Posterior vena cava (tissue), 2 donors: ENCODE measurements at regions of chr5 and their contacts with region 1.

Region 1: GRCh38 chr5:96816411-96816939 is 8.7 kb upstream of the ERAP1 start:
- DNase-seq: no peak

Region 2: GRCh38 chr5:95102080-95102479 is 1714.4 kb before region 1 on chr5:
- intact Hi-C with region 1: no loop called
- DNase-seq: no peak

Region 3: GRCh38 chr5:96112123-96112670 is 704.3 kb before region 1 on chr5:
- intact Hi-C with region 1: no loop called
- DNase-seq: no peak

Region 4: DNA sequence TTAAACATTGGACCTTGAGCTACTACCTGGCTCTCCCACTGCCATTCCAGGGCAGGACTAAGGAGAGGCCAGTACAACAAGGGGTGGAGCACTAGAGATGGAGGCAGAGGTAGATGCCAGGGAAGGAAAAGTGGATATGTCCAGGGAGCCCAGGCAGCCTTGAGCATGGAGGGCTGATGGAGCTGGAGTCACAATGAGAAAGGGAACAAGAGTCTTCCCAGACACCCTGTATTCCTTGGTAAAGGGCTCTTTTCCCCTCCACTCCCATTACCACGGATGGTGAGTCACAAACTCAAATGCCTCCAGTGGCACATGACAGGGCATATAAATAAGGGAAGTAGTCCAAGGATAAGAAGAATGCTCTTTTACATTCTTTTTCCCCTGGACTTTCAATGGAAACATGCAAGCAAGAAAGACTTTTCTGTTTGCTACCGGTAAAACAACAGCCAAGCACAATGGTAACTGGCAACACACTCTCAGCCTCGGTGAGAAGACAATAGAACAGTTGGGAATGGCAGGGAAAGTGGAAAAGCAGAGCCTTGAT is 25.4 kb before region 1 on chr5:
- intact Hi-C with region 1: no loop called
- DNase-seq: no peak

Region 5: DNA sequence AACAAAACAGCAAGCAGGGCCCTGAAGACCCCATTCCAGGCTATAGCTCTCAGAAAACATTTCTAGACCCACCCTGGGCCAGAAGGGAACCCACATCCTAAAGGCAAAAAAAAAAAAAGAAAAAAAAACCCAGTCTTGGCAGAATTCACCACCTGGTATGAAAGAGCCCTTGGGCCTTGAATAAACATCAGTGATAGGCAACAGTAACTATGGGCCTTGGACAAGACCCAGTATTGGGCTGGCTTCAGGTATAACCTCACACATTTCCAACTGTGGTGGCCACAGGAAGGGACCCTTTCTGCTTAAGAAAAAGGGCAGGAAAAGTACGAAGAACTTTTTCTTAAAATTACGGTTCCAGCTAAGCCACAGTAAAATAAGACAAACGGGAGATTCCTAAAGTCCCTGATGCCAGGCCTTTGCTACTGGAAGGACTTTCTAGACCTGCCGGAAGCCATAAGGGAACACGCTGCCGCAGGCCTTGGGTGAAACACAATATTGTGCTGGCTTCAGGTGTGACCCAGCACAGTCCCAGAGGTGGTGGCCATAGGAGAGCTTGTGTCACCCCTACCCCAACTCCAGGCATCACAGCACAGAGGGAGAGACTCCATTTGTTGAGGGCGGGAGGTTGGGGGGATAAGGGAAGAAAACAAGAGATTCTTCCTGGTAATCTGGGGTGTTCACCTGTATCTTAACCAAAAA is 1451.8 kb after region 1 on chr5:
- intact Hi-C with region 1: loop called in 1 of 2 experiments (anchors 10 kb)
- DNase-seq: peak; percentile 41